K562 (cell line): ENCODE measurements at regions of chr5 and their contacts with region 1.

Region 1: DNA sequence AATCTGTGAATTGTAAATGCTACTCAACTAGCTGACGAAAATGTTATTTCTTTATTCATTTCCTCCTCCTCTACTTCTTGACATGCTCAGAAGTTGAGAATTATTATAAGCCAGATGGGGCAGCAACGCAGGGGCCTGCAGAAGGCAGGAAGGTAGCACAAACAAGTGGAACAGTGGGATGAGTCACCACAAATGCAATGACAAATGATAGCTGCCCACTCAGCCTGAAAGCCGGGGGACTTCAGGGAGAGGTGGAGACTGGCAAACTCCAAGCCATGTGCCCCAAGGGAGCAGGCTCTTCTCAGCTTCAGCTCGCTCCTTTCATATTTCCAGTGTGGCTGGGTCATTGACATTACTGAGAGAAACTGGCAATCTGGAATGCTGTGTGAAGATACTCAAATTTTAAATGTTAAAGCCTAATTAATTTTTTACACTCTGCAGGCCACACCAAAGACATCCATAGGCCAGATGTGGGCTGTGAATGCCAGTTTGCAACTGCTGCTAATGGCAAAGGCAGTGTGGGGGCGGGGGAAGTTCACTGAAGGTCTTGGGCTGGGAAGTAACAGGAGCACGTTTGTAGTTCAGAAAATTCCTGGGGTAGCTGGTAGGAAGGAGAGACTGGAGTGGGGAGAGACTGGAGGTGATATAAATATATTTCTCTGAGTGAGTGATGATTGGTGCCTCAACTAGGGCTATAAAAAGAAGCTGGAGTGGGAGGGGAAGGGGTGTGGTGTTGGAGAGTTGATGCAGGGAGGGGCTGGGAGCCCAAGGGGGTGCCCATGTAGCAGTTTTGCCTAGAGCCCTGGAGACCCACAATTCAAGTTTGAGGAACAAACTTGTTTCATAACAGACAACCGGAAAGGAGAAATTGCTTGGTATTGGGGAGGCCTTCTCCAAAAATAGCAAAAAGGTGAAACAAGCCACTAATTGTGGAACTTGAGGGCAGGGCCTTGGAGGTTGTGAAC is 20.8 kb upstream of the ADRB2 start:
- DNase-seq: peak; percentile 45 to 71 (median 54)
- ATAC-seq: peak; percentile 59
- H3K4me3 ChIP-seq: no peak overlapping the region
- H3K27ac ChIP-seq: peak overlapping the region; percentile 67
- H3K4me1 ChIP-seq: peaks cover 25 to 65% of the 10 kb centered on the region in 2 experiments
- H3K27me3 ChIP-seq: no peaks in the 10 kb centered on the region
- CTCF ChIP-seq: no peak
- EP300 ChIP-seq: no peak
- POLR2A ChIP-seq: no peak
- RAD21 ChIP-seq: no peak

Region 2: GRCh38 chr5:148746826-148747535 is 58.6 kb before region 1 on chr5:
- CTCF ChIA-PET with region 1: no interaction called
- POLR2A ChIA-PET with region 1: no interaction called
- in situ Hi-C with region 1: no loop called
- intact Hi-C with region 1: loop called (anchors 5 kb)
- DNase-seq: peak in 2 of 4 experiments; percentile 38 to 48
- ATAC-seq: peak; percentile 61
- H3K4me3 ChIP-seq: no peak overlapping the region
- H3K27ac ChIP-seq: no peak overlapping the region
- H3K4me1 ChIP-seq: peaks cover 0 to 14% of the 10 kb centered on the region in 2 experiments; a peak in 2 of 5 replicates
- H3K27me3 ChIP-seq: no peaks in the 10 kb centered on the region; a peak in 1 of 5 replicates
- CTCF ChIP-seq: no peak
- EP300 ChIP-seq: peak; percentile 67
- POLR2A ChIP-seq: no peak
- RAD21 ChIP-seq: no peak

Region 3: GRCh38 chr5:149268928-149269557 is 463.4 kb after region 1 on chr5:
- CTCF ChIA-PET with region 1: no interaction called
- POLR2A ChIA-PET with region 1: no interaction called
- in situ Hi-C with region 1: no loop called
- intact Hi-C with region 1: no loop called
- DNase-seq: peak; percentile 69 to 77 (median 74)
- ATAC-seq: peak; percentile 82
- H3K4me3 ChIP-seq: no peak overlapping the region
- H3K27ac ChIP-seq: no peak overlapping the region
- H3K4me1 ChIP-seq: peaks cover 0 to 12% of the 10 kb centered on the region in 2 experiments; a peak in 2 of 5 replicates
- H3K27me3 ChIP-seq: peaks cover 12 to 48% of the 10 kb centered on the region in 2 experiments; a peak in 3 of 5 replicates
- CTCF ChIP-seq: peak; percentile 62 to 83 (median 72); a peak in 5 of 6 replicates
- EP300 ChIP-seq: no peak
- POLR2A ChIP-seq: no peak
- RAD21 ChIP-seq: peak; percentile 81 to 85